ENCODE measurements at regions of chr10 and their contacts with region 1.

Region 1: GRCh38 chr10:122980209-122981065 is at the start of gene PSTK:
- DNase-seq: peak; percentile 88
- H3K4me3 Mint-ChIP-seq: peak within 1 kb of the TSS; percentile 86
- H3K27ac Mint-ChIP-seq: peak within 1 kb of the TSS; percentile 84
- H3K4me1 Mint-ChIP-seq: peaks cover 20% of the 10 kb centered on the region
- H3K27me3 Mint-ChIP-seq: no peaks in the 10 kb centered on the region
- CTCF ChIP-seq: peak; percentile 93
- total RNA-seq, gene PSTK: 6.5 and 8.3 TPM in 2 replicates

Region 2: GRCh38 chr10:122999347-122999746 is 18.9 kb after region 1 on chr10:
- CTCF ChIA-PET with region 1: interaction called, 8 read pairs
- POLR2A ChIA-PET with region 1: interaction called, 13 read pairs
- intact Hi-C with region 1: no loop called
- DNase-seq: peak; percentile 16
- H3K4me3 Mint-ChIP-seq: no peak overlapping the region
- H3K27ac Mint-ChIP-seq: peak overlapping the region; percentile 18
- H3K4me1 Mint-ChIP-seq: peaks cover 20% of the 10 kb centered on the region
- H3K27me3 Mint-ChIP-seq: no peaks in the 10 kb centered on the region
- CTCF ChIP-seq: no peak

Measured in MCF 10A (cell line).